HepG2 (cell line): ENCODE measurements at regions of chr22 and their contacts with region 1.

Region 1: DNA sequence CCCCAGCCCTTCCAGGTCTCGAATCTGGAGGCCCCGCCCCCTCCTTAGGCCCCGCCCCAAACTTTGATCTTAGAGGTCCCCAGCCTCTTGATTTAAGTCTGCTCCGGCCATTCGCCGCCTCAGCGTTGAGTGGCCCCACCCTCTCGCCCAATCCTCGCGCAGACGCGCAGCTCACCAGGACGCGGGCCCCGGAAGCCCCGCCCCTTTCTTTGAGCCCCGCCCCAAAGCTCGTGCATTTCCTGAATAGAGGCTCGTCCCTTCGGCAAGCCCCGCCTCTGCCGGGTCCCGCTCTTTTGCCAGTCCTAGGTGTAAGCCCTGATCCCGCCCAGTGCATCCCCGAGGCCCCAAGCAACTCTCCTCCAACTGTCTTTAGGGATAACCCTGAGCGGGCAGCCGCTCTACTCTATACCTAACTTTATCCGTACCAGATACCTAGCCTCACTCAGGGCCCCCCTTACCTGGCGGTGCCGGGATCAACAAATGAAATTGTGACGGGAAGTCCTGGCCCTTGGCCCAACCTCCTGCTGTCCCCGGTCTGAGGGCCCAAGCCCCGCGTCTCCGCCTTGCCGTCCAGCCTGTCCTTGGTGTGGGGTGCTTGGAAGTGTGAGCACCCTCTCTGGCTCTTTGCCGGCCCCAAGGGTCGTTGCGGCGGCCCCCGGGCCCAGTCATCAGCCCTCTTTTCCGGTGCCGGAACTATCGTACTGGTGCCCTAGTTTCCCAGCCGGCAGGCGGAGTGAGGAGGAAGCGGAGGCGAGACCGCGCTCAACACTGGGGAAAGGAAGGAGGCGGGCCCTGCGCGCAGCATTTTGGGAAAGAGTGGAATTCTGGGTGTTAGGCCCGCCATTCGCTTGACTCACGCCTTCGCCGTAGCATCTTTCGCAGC is at the start of gene SNRPD3:
- DNase-seq: peak; percentile 96
- ATAC-seq: peak; percentile 82
- H3K4me3 ChIP-seq: peak within 1 kb of the TSS; percentile 89 to 97 (median 91)
- H3K27ac ChIP-seq: peak within 1 kb of the TSS; percentile 93
- H3K4me1 ChIP-seq: peaks cover 71% of the 10 kb centered on the region
- H3K27me3 ChIP-seq: no peaks in the 10 kb centered on the region; a peak in 1 of 5 replicates
- CTCF ChIP-seq: peak; percentile 29
- EP300 ChIP-seq: peak in 1 of 2 experiments; percentile 34; a peak in 1 of 4 replicates
- POLR2A ChIP-seq: peak in 1 of 2 experiments; percentile 76
- RAD21 ChIP-seq: 0 out of 2 replicates have a peak, but pooled peaks have one; percentile 35
- total RNA-seq, gene SNRPD3: 209 and 287 TPM in 2 replicates

Region 2: GRCh38 chr22:24516301-24516737 is 39.1 kb before region 1 on chr22:
- CTCF ChIA-PET with region 1: no interaction called
- POLR2A ChIA-PET with region 1: interaction called, 10 read pairs
- in situ Hi-C with region 1: no loop called
- intact Hi-C with region 1: no loop called
- DNase-seq: peak; percentile 62
- ATAC-seq: peak; percentile 20
- H3K4me3 ChIP-seq: no peak overlapping the region
- H3K27ac ChIP-seq: peak overlapping the region; percentile 39
- H3K4me1 ChIP-seq: peaks cover 98% of the 10 kb centered on the region
- H3K27me3 ChIP-seq: no peaks in the 10 kb centered on the region
- CTCF ChIP-seq: 0 out of 2 replicates have a peak, but pooled peaks have one; percentile 8
- EP300 ChIP-seq: no peak
- POLR2A ChIP-seq: no peak
- RAD21 ChIP-seq: no peak

Region 3: GRCh38 chr22:24540470-24540869 is 14.9 kb before region 1 on chr22:
- CTCF ChIA-PET with region 1: no interaction called
- POLR2A ChIA-PET with region 1: interaction called, 30 read pairs
- in situ Hi-C with region 1: no loop called
- intact Hi-C with region 1: no loop called
- DNase-seq: no peak
- ATAC-seq: no peak
- H3K4me3 ChIP-seq: no peak overlapping the region
- H3K27ac ChIP-seq: no peak overlapping the region
- H3K4me1 ChIP-seq: peaks cover 11% of the 10 kb centered on the region
- H3K27me3 ChIP-seq: no peaks in the 10 kb centered on the region
- CTCF ChIP-seq: no peak
- EP300 ChIP-seq: no peak
- POLR2A ChIP-seq: no peak
- RAD21 ChIP-seq: no peak

Region 4: GRCh38 chr22:24583221-24584165 is 28.1 kb after region 1 on chr22:
- CTCF ChIA-PET with region 1: no interaction called
- POLR2A ChIA-PET with region 1: interaction called, 138 read pairs
- in situ Hi-C with region 1: no loop called
- intact Hi-C with region 1: no loop called
- DNase-seq: peak; percentile 76
- ATAC-seq: peak; percentile 65
- H3K4me3 ChIP-seq: peak overlapping the region; percentile 45 to 69 (median 47); a peak in 5 of 6 replicates
- H3K27ac ChIP-seq: peak overlapping the region; percentile 69
- H3K4me1 ChIP-seq: peaks cover 86% of the 10 kb centered on the region
- H3K27me3 ChIP-seq: no peaks in the 10 kb centered on the region
- CTCF ChIP-seq: 0 out of 2 replicates have a peak, but pooled peaks have one; percentile 2
- EP300 ChIP-seq: no peak
- POLR2A ChIP-seq: peak in 1 of 2 experiments; percentile 44; a peak in 1 of 4 replicates
- RAD21 ChIP-seq: no peak

Region 5: GRCh38 chr22:24592851-24593558 is 37.6 kb after region 1 on chr22 and contains the start of gene LRRC75B:
- CTCF ChIA-PET with region 1: no interaction called
- POLR2A ChIA-PET with region 1: interaction called, 69 read pairs
- in situ Hi-C with region 1: loop called (anchors 5 kb)
- intact Hi-C with region 1: no loop called
- DNase-seq: peak; percentile 85
- ATAC-seq: peak; percentile 89
- H3K4me3 ChIP-seq: peak within 1 kb of the TSS; percentile 79 to 88 (median 84)
- H3K27ac ChIP-seq: peak within 1 kb of the TSS; percentile 97
- H3K4me1 ChIP-seq: peaks cover 74% of the 10 kb centered on the region
- H3K27me3 ChIP-seq: no peaks in the 10 kb centered on the region; a peak in 1 of 5 replicates
- CTCF ChIP-seq: peak; percentile 19
- EP300 ChIP-seq: peak; percentile 19 to 31; a peak in 1 of 4 replicates
- POLR2A ChIP-seq: peak; percentile 86 to 94
- RAD21 ChIP-seq: peak; percentile 49
- total RNA-seq, gene LRRC75B: 5.7 and 11.8 TPM in 2 replicates

Region 6: GRCh38 chr22:24601217-24602104 is 46.1 kb after region 1 on chr22:
- CTCF ChIA-PET with region 1: no interaction called
- POLR2A ChIA-PET with region 1: interaction called, 25 read pairs
- in situ Hi-C with region 1: no loop called
- intact Hi-C with region 1: loop called (anchors 2 kb)
- DNase-seq: peak; percentile 66
- ATAC-seq: peak; percentile 61
- H3K4me3 ChIP-seq: peak overlapping the region in 2 of 3 experiments; percentile 68 to 80; a peak in 4 of 6 replicates
- H3K27ac ChIP-seq: peak overlapping the region; percentile 82
- H3K4me1 ChIP-seq: peaks cover 40% of the 10 kb centered on the region
- H3K27me3 ChIP-seq: no peaks in the 10 kb centered on the region
- CTCF ChIP-seq: no peak
- EP300 ChIP-seq: no peak
- POLR2A ChIP-seq: peak in 1 of 2 experiments; percentile 71; a peak in 3 of 4 replicates
- RAD21 ChIP-seq: no peak